Activated T-helper 1 cell treated with anti-CD3 and anti-CD28 coated beads, Interleukin-12 subunit alpha, Interleukin-12 subunit beta, Interleukin-2, Interleukin-4 antibody, amounts not matched to agents 30 ng/mL and 10 ng/mL and 1 ng/mL, durations not matched to agents 14 hours and 24 hours and 36 hours (primary cell): ENCODE measurements at regions of chr15 and their contacts with region 1.

Region 1: DNA sequence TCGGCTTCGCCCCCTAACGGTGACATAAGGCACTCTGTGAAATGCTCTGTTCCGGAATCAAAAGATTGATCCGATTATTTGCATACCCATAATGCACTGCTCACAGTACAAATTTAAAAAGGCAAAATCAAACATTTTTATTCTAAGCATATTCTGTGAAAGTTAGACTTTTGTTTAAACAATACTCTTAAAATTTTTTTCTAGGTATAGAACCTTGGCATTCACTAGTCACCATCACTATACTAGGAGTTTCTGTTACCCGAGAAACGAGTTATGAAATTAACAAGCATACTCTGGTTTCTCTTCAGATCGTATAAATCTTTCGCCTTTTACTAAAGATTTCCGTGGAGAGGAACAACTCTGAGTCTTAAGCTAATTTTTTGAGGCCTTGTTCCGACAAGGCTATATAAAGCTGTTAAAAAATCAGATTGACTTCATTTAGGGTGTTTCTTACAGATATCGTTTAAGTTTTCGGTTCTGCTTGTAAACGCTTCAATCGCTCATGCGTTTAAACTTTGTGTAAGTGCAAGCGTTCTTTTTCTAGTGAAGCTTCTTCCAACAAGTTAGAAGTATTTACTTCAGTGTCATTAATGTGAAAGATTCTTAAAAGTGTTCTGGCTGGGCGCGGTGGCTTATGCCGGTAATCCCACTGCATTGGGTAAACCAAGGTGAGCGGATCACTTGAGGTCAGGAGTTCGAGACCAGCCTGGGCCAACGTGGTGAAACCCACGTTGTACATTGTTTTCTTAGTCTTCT is at the start of gene RNU5B-1:
- DNase-seq: peak; percentile 84
- H3K4me3 Mint-ChIP-seq: peak within 1 kb of the TSS; percentile 94
- H3K27ac Mint-ChIP-seq: peak within 1 kb of the TSS; percentile 95
- H3K4me1 Mint-ChIP-seq: peaks cover 28% of the 10 kb centered on the region
- H3K27me3 Mint-ChIP-seq: peaks cover 9% of the 10 kb centered on the region
- total RNA-seq, gene RNU5B-1: not detected in 2 replicates

Region 2: GRCh38 chr15:64697911-64698369 is 606.6 kb before region 1 on chr15:
- intact Hi-C with region 1: loop called (anchors 1 kb)
- DNase-seq: no peak
- H3K4me3 Mint-ChIP-seq: no peak overlapping the region
- H3K27ac Mint-ChIP-seq: peak overlapping the region; percentile 80
- H3K4me1 Mint-ChIP-seq: peaks cover 62% of the 10 kb centered on the region
- H3K27me3 Mint-ChIP-seq: no peaks in the 10 kb centered on the region

Region 3: GRCh38 chr15:65056871-65057548 is 247.6 kb before region 1 on chr15:
- intact Hi-C with region 1: no loop called
- DNase-seq: no peak
- H3K4me3 Mint-ChIP-seq: no peak overlapping the region
- H3K27ac Mint-ChIP-seq: no peak overlapping the region
- H3K4me1 Mint-ChIP-seq: peaks cover 5% of the 10 kb centered on the region
- H3K27me3 Mint-ChIP-seq: peaks cover 1% of the 10 kb centered on the region

Region 4: DNA sequence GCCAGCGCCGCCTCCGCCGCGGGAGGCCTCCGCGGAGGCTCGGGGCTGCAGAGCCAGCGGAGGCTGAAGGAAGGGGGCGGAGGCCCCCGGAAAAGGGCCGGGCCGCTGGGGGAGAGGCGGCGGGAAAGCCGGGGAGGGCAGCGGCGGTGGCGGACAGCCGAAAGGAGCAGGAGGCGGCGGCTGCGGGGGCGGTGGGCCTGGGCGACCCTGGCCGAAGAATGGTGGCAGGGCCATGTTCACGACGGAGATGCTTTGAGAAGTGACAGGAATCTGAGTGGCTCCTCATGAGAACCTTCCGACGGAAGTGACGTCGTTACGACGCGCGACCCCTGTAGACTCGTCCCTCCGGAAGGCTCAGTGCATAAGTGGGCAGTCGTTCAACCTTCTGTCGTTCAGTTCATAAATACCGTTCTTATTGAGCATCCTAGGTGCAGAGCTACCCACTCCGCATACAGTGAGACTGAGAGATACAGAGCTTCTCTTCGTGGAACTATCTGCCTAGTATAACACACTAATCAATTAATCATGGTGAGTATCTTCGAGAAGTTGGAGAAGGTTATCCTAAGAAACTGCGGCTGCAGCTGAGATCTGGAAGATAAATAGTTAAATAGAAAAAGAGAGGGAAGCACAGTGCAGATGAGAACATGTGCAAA is 170.9 kb before region 1 on chr15 and contains the start of gene PDCD7:
- intact Hi-C with region 1: loop called (anchors 2 kb)
- DNase-seq: peak; percentile 80
- H3K4me3 Mint-ChIP-seq: peak within 1 kb of the TSS; percentile 92
- H3K27ac Mint-ChIP-seq: peak within 1 kb of the TSS; percentile 93
- H3K4me1 Mint-ChIP-seq: peaks cover 31% of the 10 kb centered on the region
- H3K27me3 Mint-ChIP-seq: peaks cover 2% of the 10 kb centered on the region
- total RNA-seq, gene PDCD7: 51.2 and 54.7 TPM in 2 replicates

Region 5: GRCh38 chr15:65286704-65287519 is 17.7 kb before region 1 on chr15 and contains the start of gene PARP16:
- intact Hi-C with region 1: loop called (anchors 1 kb)
- DNase-seq: peak; percentile 90
- H3K4me3 Mint-ChIP-seq: peak within 1 kb of the TSS; percentile 86
- H3K27ac Mint-ChIP-seq: peak within 1 kb of the TSS; percentile 76
- H3K4me1 Mint-ChIP-seq: peaks cover 27% of the 10 kb centered on the region
- H3K27me3 Mint-ChIP-seq: no peaks in the 10 kb centered on the region
- total RNA-seq, gene PARP16: 12.4 and 14.0 TPM in 2 replicates

Region 6: DNA sequence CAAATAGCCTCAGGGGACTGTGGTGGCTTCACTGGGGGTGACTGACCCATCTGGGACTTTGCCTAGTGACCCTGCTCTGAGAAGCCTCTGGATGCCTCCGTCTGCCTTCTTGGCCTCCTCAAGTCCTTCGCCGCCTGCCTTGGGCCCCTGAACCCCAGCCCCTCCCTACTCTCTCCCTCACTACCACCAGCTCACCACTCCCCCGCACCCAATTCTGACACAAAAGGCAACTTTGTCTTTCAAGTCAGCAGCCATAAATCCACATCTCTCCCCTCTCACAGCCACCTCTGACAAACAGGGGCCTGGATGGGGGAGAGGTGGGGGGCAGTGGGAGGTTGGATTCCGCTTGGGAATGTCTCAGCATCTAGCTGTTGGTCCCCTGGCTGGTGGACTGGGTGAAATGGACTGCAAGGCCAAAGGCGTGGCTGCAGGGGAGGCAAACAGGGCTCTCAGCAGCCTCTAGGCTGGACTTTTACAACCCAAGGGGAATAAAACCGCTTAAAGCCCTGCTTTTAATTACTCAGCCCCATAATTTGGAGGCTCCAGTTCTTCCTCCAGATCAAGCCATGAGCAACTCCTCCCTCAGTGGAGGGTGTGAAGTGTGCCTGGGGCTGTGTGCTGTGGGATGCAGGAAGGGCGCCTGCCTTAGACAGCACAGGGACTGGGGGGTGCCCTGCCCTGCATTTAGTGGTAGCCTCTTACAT is 39.8 kb after region 1 on chr15:
- intact Hi-C with region 1: no loop called
- DNase-seq: no peak
- H3K4me3 Mint-ChIP-seq: no peak overlapping the region
- H3K27ac Mint-ChIP-seq: no peak overlapping the region
- H3K4me1 Mint-ChIP-seq: peaks cover 6% of the 10 kb centered on the region
- H3K27me3 Mint-ChIP-seq: peaks cover 13% of the 10 kb centered on the region

Region 7: DNA sequence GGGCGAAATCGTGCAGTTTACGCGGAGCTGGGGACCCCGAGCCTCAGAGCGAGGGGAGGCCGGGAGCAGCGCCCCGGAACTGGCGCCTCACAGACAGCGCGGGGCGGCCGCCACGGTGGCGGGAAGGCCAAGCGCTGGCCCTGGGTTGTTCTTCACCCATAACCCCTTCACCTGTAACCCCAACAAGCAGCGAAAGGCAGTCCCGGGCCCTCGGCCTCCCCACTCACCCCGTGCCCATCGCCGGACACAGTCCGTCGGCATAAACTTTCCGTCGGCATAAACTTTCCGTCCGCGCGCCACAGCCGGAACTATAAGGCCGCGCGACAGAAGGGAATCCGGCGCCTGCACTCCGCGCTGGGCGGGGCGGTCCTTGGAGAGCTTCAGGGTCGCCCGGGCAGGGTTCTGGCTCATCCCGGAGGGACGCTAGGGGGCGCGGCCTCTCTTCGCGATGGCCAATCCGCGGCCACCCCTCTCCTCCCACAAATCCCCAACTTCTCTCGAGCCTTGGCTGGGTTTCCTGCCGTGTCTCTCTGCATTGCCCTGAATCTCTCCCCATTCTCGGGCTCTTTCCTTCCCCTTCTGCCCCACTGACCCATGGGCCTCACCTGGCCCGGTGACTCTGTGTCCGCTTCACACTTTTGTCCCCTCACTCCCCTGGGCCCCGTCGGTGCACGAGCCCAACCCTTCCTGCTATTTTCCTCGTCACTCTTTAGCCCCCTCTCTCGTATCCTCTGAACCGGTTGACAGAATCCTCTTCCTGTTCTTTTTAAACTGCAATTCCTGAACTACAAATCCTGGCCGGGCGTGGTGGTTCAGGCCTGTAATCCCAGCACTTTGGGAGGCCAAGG is 306.5 kb after region 1 on chr15 and contains the start of gene INTS14:
- intact Hi-C with region 1: loop called (anchors 10 kb)
- DNase-seq: peak; percentile 89
- H3K4me3 Mint-ChIP-seq: peak within 1 kb of the TSS; percentile 90
- H3K27ac Mint-ChIP-seq: peak within 1 kb of the TSS; percentile 96
- H3K4me1 Mint-ChIP-seq: peaks cover 36% of the 10 kb centered on the region
- H3K27me3 Mint-ChIP-seq: no peaks in the 10 kb centered on the region
- total RNA-seq, gene INTS14: 47.4 and 53.3 TPM in 2 replicates

Region 8: DNA sequence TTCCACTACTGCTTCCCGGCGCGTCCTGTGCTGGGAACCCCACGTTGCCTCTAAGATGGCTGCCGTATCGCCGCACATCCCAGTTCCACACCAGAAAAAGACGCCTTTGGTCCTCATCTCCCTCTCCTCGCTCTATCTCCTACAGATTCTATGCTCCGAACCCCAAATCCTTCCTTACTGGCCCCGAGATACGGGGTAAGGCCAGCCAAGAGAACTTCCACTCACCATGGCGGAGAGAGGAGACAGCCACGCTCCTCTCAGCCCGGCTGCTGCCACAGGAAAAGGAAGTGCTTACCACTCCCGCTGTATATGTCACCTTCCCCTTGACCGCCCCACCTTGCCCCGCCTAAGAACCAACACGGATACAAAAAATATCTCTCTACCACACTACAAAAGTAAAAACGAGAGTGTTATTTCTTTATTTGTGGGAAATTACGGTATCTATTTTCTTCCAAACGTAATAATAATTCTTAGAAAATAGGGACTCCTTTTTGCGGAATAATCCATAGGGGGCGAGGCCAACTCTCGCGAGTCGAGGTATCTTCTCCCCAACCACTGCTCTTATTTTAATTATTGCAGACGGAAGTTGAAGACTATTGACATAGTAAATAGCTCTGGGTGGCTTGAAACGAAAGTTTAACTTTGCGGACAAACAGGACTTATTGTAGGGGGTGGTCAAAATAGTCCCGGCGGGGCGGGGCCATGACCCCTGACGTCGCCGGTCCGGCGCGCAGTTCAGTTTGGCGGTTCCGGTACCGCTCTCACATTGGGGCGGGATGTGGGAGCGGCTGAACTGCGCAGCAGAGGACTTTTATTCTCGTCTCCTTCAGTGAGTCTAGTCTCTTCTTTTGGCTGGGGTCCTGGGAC is 1200.2 kb after region 1 on chr15 and contains the starts of genes RPL4 and ZWILCH:
- intact Hi-C with region 1: loop called (anchors 10 kb)
- DNase-seq: peak; percentile 77
- H3K4me3 Mint-ChIP-seq: peak within 1 kb of the TSS; percentile 99
- H3K27ac Mint-ChIP-seq: peak within 1 kb of the TSS; percentile 99
- H3K4me1 Mint-ChIP-seq: peaks cover 55% of the 10 kb centered on the region
- H3K27me3 Mint-ChIP-seq: no peaks in the 10 kb centered on the region
- total RNA-seq, gene RPL4: 3,069 and 3,091 TPM in 2 replicates
- total RNA-seq, gene ZWILCH: 37.5 and 42.2 TPM in 2 replicates